ENCODE measurements at regions of chr2 and their contacts with region 1.

Region 1: DNA sequence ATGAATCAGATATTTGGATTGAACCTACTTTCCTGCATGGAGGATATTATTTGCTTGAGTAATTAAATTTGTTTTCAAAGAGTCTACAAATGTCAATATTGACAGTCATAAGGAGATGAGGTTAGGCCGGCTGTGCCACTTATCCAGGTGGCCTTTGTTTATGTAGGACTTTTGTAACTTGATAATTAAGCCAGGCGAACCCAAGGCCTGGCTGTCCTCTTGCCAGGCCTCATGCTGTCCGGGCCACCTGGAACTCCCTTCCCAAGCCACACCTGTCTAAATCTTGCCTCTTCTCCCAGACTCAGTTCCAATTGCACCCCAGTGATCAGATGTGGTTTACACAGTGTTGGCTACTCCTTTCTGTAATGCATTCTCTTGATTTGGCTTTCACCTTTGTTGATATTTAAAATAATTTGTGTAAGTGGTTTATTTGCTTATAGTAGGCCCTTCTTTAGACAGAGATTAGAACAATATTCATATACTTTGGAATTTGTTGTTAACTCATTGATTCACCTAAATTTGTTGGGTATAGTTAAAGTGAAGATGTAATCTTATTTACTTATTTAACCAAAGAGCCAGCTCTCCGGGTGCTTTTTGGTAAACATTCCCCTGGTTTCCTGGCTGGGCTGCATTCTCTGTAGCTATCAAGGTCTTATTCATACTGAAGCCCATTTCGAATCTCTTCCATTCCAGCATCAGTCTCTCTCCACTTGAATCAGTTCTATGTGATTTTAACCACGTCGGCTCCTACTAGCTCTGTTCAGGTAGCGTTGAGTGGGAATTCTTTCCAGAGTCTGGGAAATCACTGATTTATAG is 255.5 kb downstream of the ACKR3 start:
- DNase-seq: no peak
- ATAC-seq: peak in 1 of 4 donors; percentile 45
- H3K4me3 ChIP-seq: no peak overlapping the region
- H3K27ac ChIP-seq: no peak overlapping the region
- H3K4me1 ChIP-seq: peaks cover 9% of the 10 kb centered on the region
- H3K27me3 ChIP-seq: no peaks in the 10 kb centered on the region
- CTCF ChIP-seq: no peak

Region 2: DNA sequence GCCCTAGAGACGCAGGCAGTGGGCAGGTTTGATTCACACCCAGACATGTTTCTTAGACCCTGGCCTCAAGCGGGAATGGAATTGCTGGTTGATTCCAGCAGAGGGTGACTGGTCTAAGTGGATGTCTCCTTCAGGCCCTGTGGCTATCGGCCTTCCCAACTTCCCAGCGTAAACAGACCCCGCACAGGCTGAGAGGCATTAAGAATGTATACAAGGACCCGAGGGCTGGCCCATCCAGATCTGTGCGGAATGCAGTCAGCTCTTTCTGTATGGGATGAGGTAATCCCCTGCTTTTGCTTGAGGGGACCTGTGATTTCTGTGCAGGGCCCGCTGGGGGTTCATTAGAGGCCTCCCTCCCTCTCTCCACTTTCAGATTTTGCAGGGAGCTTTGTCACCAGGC is 249.0 kb before region 1 on chr2:
- intact Hi-C with region 1: loop called in 1 of 2 experiments (anchors 5 kb)
- DNase-seq: no peak
- ATAC-seq: peak in 2 of 4 donors; percentile 16 to 21
- H3K4me3 ChIP-seq: peak overlapping the region; percentile 17
- H3K27ac ChIP-seq: peak overlapping the region; percentile 60
- H3K4me1 ChIP-seq: peaks cover 37% of the 10 kb centered on the region
- H3K27me3 ChIP-seq: no peaks in the 10 kb centered on the region
- CTCF ChIP-seq: no peak

Region 3: DNA sequence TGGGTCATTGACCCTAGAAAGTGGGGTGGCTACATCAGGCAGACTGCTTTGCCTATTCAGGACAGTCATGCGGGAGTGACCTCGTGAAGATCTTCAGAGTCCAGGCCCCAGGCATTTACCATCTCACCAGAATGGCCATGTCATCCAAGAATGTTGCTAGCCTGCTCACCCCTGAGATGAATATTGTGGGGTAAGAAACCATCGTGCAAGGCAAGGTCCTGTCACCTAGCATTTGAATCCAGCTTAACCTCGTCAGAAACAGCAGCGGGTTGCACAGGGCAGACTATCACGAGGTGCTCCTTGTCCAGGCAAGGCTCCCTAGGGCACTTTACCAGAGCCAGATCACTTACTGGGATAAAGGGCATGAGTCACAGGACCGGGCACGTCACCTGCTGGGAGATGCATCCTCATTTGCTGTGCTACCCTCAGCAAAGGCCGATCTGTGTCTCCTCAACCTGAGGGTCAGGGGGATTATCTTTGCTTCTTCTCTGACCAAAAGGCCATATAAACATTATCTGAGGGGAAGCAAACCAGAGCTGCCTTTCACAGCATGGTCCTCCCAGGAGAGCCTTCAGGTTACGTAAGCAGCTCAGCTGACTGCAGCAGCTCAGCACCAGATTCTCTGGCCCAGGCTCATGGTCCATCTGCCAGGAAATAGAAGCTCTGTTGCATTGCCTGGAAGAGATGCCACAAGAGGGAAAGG is 93.1 kb before region 1 on chr2:
- intact Hi-C with region 1: loop called in 1 of 2 experiments (anchors 5 kb)
- DNase-seq: peak; percentile 79 to 90
- ATAC-seq: peak; percentile 93 to 97 (median 94)
- H3K4me3 ChIP-seq: no peak overlapping the region
- H3K27ac ChIP-seq: peak overlapping the region; percentile 88
- H3K4me1 ChIP-seq: peaks cover 28% of the 10 kb centered on the region
- H3K27me3 ChIP-seq: no peaks in the 10 kb centered on the region
- CTCF ChIP-seq: no peak

Region 4: DNA sequence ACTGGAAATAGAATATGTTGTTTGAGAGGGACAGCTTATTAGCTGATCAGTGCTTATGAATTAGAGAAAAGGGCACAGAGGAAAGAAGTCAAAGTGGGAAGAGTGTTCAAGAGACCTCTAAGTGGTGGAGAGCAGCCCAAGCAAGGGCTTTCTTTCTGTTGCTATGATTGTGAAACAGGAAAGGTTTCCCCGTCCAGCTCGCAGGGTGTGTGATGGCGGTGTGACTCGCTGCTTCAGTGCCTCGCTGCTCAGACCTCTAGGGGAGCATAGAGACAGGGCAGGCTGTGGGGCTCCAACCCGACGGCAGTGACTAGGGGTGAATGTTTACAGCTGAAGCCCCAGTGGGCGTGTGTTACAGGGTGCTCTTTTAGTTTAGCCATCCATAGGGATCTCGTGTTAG is 94.1 kb after region 1 on chr2:
- intact Hi-C with region 1: no loop called
- DNase-seq: no peak
- ATAC-seq: no peak
- H3K4me3 ChIP-seq: no peak overlapping the region
- H3K27ac ChIP-seq: no peak overlapping the region
- H3K4me1 ChIP-seq: no peaks in the 10 kb centered on the region
- H3K27me3 ChIP-seq: no peaks in the 10 kb centered on the region
- CTCF ChIP-seq: no peak

Measured in psoas muscle (tissue), 8 donors.